ENCODE measurements at regions of chr16 and their contacts with region 1.

Region 1: DNA sequence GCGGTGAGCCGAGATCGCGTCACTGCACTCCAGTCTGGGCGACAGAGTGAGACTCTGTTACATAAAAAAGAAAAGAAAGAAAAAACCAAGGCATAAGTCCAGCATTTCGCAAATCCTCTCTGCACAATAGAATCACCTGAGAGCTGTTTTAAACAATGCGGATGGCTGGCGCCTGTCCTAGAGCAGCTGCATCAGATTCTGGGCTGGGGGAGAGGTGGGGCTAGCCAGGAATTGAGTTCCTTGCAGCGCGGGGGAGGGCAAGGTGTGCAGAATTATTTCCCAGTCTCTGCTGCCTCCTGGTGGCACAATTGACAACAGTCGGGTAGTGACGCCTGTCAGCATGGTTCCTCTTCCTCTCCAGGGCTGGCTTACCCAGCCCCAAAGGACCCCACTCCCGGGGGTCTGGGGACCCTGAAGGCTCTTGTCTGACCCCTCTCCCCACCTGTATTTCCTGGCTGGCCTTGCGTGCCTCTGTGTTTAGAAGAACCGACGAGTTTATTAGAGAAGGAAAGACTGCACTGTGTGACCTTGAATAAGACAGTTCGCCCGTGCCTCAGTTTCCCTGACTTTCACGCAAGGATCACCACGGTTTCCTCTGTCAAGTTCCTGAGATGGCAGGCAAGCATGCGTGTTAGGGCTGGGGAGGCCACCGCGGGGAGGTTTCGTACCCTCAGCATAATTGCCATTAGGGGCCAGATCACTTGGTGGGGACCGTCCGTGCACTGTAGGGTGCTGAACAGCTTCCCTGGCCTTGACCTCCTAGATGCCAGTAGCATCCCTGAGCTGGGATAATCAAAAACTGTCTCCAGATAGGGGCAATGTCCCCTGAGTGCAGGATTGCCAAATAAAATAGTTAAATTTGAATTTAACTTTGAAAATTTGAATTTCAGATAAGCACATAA is 41.0 kb upstream of the PLCG2 start:
- DNase-seq: peak; percentile 75
- ATAC-seq: peak; percentile 58
- H3K4me3 Mint-ChIP-seq: peak overlapping the region; percentile 79
- H3K27ac Mint-ChIP-seq: peak overlapping the region; percentile 95
- H3K4me1 Mint-ChIP-seq: peaks cover 53% of the 10 kb centered on the region
- H3K27me3 Mint-ChIP-seq: no peaks in the 10 kb centered on the region
- CTCF ChIP-seq: no peak

Region 2: DNA sequence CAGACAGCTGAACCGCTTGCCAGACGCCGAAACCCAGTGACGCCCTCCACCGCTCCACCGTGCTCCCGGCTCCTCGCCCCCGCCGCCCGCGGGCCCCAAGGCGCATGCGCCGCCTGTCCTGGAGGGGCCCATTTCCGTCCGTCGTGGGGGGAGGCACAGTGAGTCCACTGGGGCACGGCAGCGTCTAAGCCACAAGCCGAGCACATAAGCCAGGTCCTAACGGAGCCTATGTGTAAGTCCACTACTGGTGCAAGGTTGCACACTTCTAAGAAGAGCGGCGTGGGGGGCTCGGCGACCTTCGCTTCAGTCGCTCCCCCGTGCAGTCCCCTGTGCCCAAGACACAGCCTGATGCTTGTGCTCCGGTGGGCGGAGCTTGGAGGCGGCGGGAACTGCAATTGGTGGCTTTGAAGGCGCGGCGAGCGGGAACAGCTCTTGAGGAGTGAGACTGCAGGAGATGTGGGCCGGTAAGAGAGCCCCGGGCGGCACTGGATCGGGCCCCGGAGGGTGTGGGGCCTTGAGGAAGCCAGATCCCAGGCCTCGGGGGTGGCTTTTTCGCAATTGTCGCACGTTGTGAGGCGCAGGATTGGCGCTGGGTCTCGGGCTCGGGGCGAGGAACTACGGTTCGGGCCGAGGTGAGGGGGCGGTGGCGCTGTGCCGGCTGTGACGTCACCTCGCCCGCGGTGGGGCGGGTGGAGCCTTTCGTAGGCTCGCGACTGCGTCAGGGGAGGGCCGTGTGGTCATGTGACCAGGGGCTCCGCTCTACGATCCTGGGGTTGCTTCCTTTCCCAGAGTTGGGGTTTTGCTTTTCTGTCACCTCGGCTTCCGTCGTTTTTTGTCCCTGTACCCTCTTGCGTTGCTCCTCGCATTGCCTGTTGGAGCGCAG is 731.1 kb before region 1 on chr16 and contains the starts of genes CENPN and CMC2:
- CTCF ChIA-PET with region 1: no interaction called
- POLR2A ChIA-PET with region 1: interaction called, 4 read pairs
- intact Hi-C with region 1: loop called (anchors 1 kb)
- DNase-seq: peak; percentile 98
- ATAC-seq: peak; percentile 84
- H3K4me3 Mint-ChIP-seq: peak within 1 kb of the TSS; percentile 94
- H3K27ac Mint-ChIP-seq: peak within 1 kb of the TSS; percentile 100
- H3K4me1 Mint-ChIP-seq: peaks cover 42% of the 10 kb centered on the region
- H3K27me3 Mint-ChIP-seq: no peaks in the 10 kb centered on the region
- CTCF ChIP-seq: no peak
- total RNA-seq, gene CENPN: 5.4 and 5.9 TPM in 2 replicates
- total RNA-seq, gene CMC2: 18.1 and 22.3 TPM in 2 replicates

Region 3: DNA sequence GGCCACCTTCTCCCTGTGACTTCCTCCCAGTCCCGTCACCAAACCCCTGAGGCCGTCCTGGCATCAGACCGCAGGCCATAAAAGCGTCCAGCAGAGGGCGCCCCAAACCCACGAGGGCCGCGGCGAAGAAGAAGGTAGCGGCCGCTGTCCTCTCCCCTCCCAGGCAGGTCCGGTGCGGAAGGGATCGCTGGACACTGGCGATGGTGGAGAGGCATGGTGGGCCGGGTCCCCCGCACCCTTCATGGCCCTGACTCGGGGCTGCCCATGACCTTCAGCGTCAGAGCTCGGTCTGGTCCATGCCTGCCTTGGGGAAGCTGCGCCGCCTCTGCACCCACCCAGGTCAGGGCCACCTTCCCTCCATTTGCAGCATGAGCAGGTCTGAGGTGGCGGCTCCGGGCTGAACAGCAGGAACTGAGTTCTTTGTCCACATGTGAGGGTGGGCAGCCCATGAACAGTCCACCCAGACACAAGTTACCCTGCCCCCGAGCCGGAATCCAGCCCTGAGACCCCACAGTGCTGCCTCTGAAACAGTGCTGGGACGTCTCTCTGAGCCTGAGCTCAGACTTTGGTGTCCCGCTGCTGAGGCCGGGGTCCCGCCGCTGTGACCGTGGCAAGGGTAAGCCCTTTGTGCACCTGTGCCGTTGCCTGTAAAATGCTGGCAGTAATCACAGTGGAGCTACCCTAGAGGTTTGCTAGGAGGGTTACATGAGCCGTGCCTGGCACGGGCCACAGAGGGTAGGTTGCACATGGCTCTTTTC is 334.3 kb before region 1 on chr16:
- CTCF ChIA-PET with region 1: interaction called, 7 read pairs
- POLR2A ChIA-PET with region 1: no interaction called
- intact Hi-C with region 1: loop called (anchors 1 kb)
- DNase-seq: peak; percentile 81
- ATAC-seq: peak; percentile 91
- H3K4me3 Mint-ChIP-seq: peak overlapping the region; percentile 19
- H3K27ac Mint-ChIP-seq: no peak overlapping the region
- H3K4me1 Mint-ChIP-seq: peaks cover 3% of the 10 kb centered on the region
- H3K27me3 Mint-ChIP-seq: peaks cover 7% of the 10 kb centered on the region
- CTCF ChIP-seq: peak; percentile 86

Region 4: GRCh38 chr16:81715358-81716196 is 22.6 kb before region 1 on chr16:
- CTCF ChIA-PET with region 1: no interaction called
- POLR2A ChIA-PET with region 1: interaction called, 9 read pairs
- intact Hi-C with region 1: loop called (anchors 1 kb)
- DNase-seq: no peak
- ATAC-seq: peak; percentile 67
- H3K4me3 Mint-ChIP-seq: peak overlapping the region; percentile 75
- H3K27ac Mint-ChIP-seq: peak overlapping the region; percentile 89
- H3K4me1 Mint-ChIP-seq: peaks cover 49% of the 10 kb centered on the region
- H3K27me3 Mint-ChIP-seq: no peaks in the 10 kb centered on the region
- CTCF ChIP-seq: no peak

Region 5: DNA sequence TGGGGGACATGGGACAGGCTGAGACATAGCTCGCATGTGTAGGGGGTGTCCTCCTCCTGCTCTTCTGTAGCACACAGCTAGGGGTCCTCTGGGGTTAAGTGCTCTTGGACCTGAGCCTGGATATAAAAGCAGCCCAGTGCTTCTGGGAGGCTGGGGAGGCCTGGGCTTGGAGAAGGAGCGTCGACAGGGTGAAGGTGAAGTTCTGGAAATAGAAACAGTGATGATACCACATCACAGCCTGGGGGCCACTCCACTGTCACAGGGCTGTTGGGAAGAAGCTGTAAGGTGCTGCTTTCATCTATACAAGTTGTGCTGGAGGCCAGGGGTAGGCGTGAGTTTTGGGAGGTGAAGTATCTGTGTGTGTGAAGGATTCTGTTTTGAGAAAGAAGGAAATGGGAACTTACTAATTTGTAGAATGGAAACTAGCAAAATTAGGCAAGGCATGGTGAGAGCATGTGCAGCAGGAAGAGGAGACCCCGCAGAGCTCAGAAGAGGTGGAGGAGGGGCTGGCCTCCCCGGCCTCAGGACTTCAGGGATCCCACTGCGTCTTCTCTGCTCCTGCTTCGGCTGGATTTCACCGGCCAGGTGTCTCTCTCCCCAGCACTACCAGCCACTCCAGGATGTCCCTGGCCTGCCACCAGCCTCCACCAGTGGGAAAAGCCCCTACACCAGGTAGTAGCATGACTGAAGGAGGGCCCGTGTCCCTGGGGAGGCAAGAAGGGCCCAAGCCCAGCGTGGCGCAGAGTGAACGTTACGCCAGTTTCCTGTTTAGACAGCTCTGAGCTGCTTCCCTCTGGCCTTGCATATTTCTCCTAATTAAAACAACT is 60.4 kb after region 1 on chr16:
- CTCF ChIA-PET with region 1: interaction called, 3 read pairs
- POLR2A ChIA-PET with region 1: interaction called, 38 read pairs
- intact Hi-C with region 1: loop called (anchors 1 kb)
- DNase-seq: peak; percentile 74
- ATAC-seq: peak; percentile 80
- H3K4me3 Mint-ChIP-seq: peak overlapping the region; percentile 67
- H3K27ac Mint-ChIP-seq: peak overlapping the region; percentile 89
- H3K4me1 Mint-ChIP-seq: peaks cover 87% of the 10 kb centered on the region
- H3K27me3 Mint-ChIP-seq: no peaks in the 10 kb centered on the region
- CTCF ChIP-seq: no peak

Region 6: DNA sequence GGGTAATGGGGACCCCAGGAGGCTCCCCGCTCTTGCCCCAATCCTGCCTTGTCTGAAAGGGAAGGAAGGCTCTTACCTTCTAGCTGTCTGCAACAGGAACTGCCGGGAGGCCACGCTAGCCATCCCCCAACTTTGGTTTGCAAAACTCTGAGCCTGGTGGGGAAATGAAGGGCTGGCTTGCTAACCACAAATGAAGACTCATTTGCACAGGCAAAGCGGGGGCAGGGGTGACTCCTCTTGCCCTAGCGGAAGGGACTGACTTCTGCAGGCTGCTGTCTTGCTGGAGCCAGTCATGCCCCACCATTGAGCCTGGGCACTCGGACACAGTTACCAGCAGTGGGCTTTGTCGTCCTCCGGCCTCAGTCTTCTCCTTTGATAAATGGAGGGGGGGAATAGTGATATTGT is 93.6 kb after region 1 on chr16:
- CTCF ChIA-PET with region 1: no interaction called
- POLR2A ChIA-PET with region 1: interaction called, 14 read pairs
- intact Hi-C with region 1: loop called (anchors 2 kb)
- DNase-seq: peak; percentile 69
- ATAC-seq: peak; percentile 69
- H3K4me3 Mint-ChIP-seq: peak overlapping the region; percentile 77
- H3K27ac Mint-ChIP-seq: peak overlapping the region; percentile 97
- H3K4me1 Mint-ChIP-seq: peaks cover 96% of the 10 kb centered on the region
- H3K27me3 Mint-ChIP-seq: no peaks in the 10 kb centered on the region
- CTCF ChIP-seq: no peak

Region 7: GRCh38 chr16:81973737-81974136 is 235.6 kb after region 1 on chr16:
- CTCF ChIA-PET with region 1: no interaction called
- POLR2A ChIA-PET with region 1: no interaction called
- intact Hi-C with region 1: no loop called
- DNase-seq: no peak
- ATAC-seq: no peak
- H3K4me3 Mint-ChIP-seq: no peak overlapping the region
- H3K27ac Mint-ChIP-seq: no peak overlapping the region
- H3K4me1 Mint-ChIP-seq: no peaks in the 10 kb centered on the region
- H3K27me3 Mint-ChIP-seq: no peaks in the 10 kb centered on the region
- CTCF ChIP-seq: no peak

Region 8: GRCh38 chr16:82263521-82264143 is 525.5 kb after region 1 on chr16:
- CTCF ChIA-PET with region 1: no interaction called
- POLR2A ChIA-PET with region 1: no interaction called
- intact Hi-C with region 1: no loop called
- DNase-seq: no peak
- ATAC-seq: peak; percentile 60
- H3K4me3 Mint-ChIP-seq: no peak overlapping the region
- H3K27ac Mint-ChIP-seq: no peak overlapping the region
- H3K4me1 Mint-ChIP-seq: no peaks in the 10 kb centered on the region
- H3K27me3 Mint-ChIP-seq: peaks cover 8% of the 10 kb centered on the region
- CTCF ChIP-seq: no peak

Measured in activated B cell treated with CpG ODN at 0.5 μM for 24 hours (primary cell).